Activated T-helper 1 cell treated with anti-CD3 and anti-CD28 coated beads, Interleukin-12 subunit alpha, Interleukin-12 subunit beta, Interleukin-2, Interleukin-4 antibody, amounts not matched to agents 30 ng/mL and 10 ng/mL and 1 ng/mL, durations not matched to agents 14 hours and 24 hours and 36 hours (primary cell): ENCODE measurements at regions of chr5 and their contacts with region 1.

Region 1: GRCh38 chr5:115634343-115635132 is 8.7 kb upstream of the TMED7 start:
- DNase-seq: peak; percentile 67
- H3K4me3 Mint-ChIP-seq: peak overlapping the region; percentile 24
- H3K27ac Mint-ChIP-seq: no peak overlapping the region
- H3K4me1 Mint-ChIP-seq: peaks cover 48% of the 10 kb centered on the region
- H3K27me3 Mint-ChIP-seq: peaks cover 63% of the 10 kb centered on the region

Region 2: DNA sequence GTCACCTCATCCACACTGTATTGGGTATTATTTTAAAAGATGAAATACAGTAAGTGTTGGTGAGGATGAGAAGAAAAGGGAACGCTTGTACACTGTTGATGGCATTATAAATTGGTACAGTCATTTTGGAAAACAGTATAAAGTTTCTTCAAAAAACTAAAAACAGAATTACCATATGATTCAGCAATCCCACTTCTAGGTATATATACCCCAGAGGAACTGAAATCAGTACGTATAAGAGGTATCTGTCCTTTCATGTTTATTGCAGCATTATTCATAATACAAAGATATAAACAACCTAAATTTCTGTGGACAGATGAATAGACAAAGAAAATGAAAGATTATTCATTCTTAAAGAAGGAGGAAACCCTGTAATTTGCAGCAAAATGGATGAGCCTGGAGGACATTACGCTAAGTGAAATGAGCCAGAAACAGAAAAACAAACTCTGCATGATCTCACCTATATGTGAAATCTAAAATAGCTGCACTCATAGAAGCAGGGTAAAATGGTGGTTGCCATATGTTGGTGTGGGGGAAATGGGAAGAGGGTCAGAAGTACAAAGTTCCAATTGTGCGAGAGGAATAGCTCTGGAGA is 656.5 kb before region 1 on chr5:
- intact Hi-C with region 1: no loop called
- DNase-seq: no peak
- H3K4me3 Mint-ChIP-seq: no peak overlapping the region
- H3K27ac Mint-ChIP-seq: no peak overlapping the region
- H3K4me1 Mint-ChIP-seq: no peaks in the 10 kb centered on the region
- H3K27me3 Mint-ChIP-seq: no peaks in the 10 kb centered on the region

Region 3: DNA sequence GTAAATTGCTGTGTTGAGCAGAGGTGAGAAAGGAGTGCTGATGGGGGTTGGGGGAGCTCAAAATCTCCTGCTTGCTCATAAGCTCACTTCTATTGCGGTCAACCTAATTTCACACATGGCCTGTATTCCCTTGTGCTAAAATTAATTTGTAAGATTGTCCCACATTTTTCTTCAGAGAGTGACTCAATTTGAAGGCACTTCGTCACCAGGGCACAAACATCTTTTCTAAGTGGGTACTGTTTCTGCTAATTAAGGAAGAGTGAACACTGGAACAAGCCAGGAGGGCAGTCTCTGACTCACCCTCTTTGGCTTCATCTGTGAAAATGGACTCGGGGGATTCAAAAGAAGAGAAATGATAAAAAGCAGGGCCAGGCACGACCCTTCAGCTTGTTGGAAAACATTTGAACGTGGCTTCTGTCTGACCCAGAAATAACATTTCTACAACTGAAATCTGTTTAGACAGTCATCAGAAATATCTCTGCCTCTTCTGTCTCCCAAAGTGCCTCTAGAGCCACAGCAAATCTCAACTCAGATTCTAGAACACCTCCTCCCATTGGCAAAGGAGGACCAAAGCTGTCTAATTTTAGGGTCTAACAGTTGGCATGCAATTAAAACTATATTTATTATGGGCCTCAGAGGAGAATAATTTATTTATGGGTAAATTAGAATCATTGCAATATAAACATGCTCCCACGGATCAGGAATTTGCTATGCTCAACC is 139.8 kb before region 1 on chr5:
- intact Hi-C with region 1: no loop called
- DNase-seq: no peak
- H3K4me3 Mint-ChIP-seq: no peak overlapping the region
- H3K27ac Mint-ChIP-seq: no peak overlapping the region
- H3K4me1 Mint-ChIP-seq: no peaks in the 10 kb centered on the region
- H3K27me3 Mint-ChIP-seq: peaks cover 26% of the 10 kb centered on the region

Region 4: GRCh38 chr5:115559524-115559923 is 75.0 kb before region 1 on chr5:
- intact Hi-C with region 1: no loop called
- DNase-seq: no peak
- H3K4me3 Mint-ChIP-seq: no peak overlapping the region
- H3K27ac Mint-ChIP-seq: no peak overlapping the region
- H3K4me1 Mint-ChIP-seq: peaks cover 10% of the 10 kb centered on the region
- H3K27me3 Mint-ChIP-seq: peaks cover 18% of the 10 kb centered on the region

Region 5: DNA sequence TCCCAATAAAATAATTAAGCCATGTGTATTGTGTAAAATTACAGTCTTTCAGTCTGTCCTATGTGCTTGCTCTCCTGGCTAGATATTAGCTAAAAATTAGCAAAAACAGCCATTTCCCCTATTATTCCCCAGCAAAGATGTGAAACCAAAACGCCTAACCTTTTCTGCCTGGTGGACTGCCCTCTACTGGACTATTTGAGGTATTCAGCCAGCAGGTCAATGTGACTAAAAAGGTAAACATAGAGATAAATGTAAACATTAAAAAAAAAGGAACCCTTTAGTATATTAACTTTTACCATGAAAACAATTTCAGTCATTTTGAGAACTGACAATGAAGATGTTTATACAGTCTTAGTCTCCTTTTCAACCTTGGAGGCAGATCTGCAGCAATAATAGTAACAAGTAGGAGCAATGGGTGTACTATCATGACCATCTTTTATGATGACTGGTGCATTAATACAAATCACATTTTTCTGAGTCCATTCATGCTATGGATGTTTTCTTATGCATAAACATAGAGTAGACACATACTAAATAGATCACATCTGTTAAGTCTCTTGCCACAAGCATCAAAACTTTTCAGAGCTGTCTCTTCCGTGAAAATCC is 196.7 kb after region 1 on chr5:
- intact Hi-C with region 1: loop called (anchors 1 kb)
- DNase-seq: no peak
- H3K4me3 Mint-ChIP-seq: no peak overlapping the region
- H3K27ac Mint-ChIP-seq: no peak overlapping the region
- H3K4me1 Mint-ChIP-seq: peaks cover 13% of the 10 kb centered on the region
- H3K27me3 Mint-ChIP-seq: no peaks in the 10 kb centered on the region

Region 6: GRCh38 chr5:116068028-116068632 is 433.6 kb after region 1 on chr5:
- intact Hi-C with region 1: loop called (anchors 1 kb)
- DNase-seq: peak; percentile 9
- H3K4me3 Mint-ChIP-seq: no peak overlapping the region
- H3K27ac Mint-ChIP-seq: no peak overlapping the region
- H3K4me1 Mint-ChIP-seq: no peaks in the 10 kb centered on the region
- H3K27me3 Mint-ChIP-seq: peaks cover 43% of the 10 kb centered on the region